ENCODE measurements at regions of chr5 and their contacts with region 1.

Region 1: DNA sequence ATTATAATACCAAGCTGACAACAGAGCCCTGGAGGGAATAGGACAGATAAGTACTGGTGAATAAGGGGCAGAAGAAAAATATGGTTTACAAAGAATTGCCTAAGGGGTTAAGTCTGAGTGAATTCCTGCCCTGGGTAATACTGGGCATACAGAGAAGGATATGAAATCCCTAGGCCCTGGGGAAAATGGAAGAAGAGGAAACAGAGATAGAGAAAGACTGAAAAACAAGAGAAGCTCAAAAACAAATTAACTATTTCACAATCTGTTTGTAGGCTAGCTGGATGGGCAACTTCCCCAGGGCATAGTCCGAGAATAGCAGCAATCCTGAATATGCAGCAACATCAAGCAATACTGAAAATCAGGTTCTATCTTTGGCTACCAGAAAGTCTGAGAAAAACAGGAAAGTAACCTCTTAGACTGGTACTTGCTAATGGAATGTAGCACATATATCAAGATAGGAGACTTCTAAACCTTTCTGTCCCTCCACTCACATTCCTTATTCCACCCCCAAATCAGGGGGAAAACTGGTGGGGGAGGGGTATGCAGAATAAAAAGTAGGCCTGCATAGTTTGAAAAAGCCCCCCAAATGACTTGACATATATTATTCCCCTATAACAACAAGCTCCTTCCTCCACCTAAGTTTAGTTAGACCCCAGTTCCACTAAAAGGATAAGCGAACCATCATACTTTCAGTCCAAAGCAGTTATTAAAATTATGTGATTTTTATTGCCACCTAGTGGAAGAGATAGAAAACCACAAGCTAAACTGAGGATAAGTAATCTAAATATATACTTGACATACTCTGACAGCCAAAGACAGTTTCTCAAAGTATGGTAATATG is 20.6 kb downstream of the SLC38A9 start:
- DNase-seq: no peak
- H3K4me3 ChIP-seq: peak overlapping the region in 1 of 4 donors; percentile 5
- H3K27ac ChIP-seq: peak overlapping the region in 2 of 5 donors; percentile 2 to 49
- H3K4me1 ChIP-seq: peaks cover 0 to 14% of the 10 kb centered on the region in 2 donors
- H3K27me3 ChIP-seq: no peaks in the 10 kb centered on the region
- CTCF ChIP-seq: peak; percentile 59 to 84 (median 70)
- POLR2A ChIP-seq: no peak

Region 2: DNA sequence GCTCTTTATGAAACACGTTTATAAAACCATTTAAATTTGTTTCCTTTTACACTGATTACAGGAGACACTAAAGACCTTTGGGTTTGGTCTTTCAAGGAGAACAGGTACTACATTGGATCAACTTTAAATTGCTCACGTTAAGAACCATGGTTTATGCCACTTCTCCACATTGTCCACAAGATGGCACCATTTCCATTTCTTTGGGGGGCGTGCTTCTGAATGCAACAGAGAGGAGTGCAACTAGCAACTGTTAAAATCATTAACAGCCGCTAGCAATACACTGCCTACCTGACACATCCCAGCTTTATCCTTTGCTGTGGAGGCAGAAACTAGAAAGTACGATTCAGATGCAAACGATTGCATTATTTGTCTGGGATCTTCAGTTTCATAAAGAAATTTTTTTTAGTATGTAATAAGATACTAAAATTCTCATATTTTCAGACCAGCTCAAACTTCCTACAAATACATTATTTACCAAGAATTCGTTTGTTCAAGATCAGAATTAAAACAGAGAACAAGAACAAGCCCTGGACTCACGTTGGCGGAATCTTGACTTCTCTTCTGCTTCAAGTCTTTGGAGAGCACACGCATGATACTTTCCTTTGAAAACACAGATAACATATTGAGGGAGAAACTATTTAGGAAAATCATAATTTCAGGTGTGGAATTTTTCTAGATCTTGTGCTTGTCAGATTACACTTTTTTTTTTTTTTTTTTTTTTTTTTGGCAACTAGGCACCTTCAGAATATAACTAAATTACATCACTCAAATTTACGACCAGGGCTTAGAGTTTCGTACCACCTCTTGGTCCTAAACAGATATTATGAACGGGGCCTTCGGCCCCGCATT is 519.2 kb before region 1 on chr5:
- intact Hi-C with region 1: loop called in 1 of 2 experiments (anchors 5 kb)
- DNase-seq: peak; percentile 37 to 68 (median 48)
- H3K4me3 ChIP-seq: peak overlapping the region in 1 of 4 donors; percentile 62
- H3K27ac ChIP-seq: no peak overlapping the region
- H3K4me1 ChIP-seq: peaks cover 13 to 26% of the 10 kb centered on the region in 2 donors
- H3K27me3 ChIP-seq: peaks cover 43% of the 10 kb centered on the region
- CTCF ChIP-seq: peak; percentile 70 to 84 (median 82)
- POLR2A ChIP-seq: no peak

Region 3: DNA sequence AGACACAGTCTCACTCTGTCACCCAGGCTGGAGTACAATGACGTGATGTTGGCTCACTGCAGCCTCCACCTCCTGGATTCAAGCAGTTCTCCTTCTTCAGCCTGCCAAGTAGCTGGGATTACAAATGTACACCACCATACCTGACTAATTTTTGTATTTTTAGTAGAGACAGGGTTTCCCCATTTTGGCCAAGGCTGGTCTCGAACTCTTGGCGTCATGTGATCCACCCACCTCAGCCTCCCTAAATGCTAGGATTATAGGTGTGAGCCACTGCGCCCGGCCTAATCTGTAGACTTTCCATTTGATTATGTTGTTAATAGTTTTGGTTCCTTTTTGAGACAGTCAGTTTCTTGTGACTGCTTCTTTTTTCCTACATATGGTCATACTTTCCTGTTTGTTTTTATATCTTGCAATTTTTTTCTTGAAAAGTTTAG is 352.7 kb before region 1 on chr5:
- intact Hi-C with region 1: loop called in 1 of 2 experiments (anchors 10 kb)
- DNase-seq: peak in 1 of 7 donors; percentile 27
- H3K4me3 ChIP-seq: no peak overlapping the region
- H3K27ac ChIP-seq: no peak overlapping the region
- H3K4me1 ChIP-seq: peaks cover 0 to 12% of the 10 kb centered on the region in 2 donors
- H3K27me3 ChIP-seq: no peaks in the 10 kb centered on the region
- CTCF ChIP-seq: no peak
- POLR2A ChIP-seq: no peak

Region 4: GRCh38 chr5:55347786-55348185 is 343.7 kb before region 1 on chr5:
- intact Hi-C with region 1: loop called in 1 of 2 experiments (anchors 5 kb)
- DNase-seq: no peak
- H3K4me3 ChIP-seq: no peak overlapping the region
- H3K27ac ChIP-seq: no peak overlapping the region
- H3K4me1 ChIP-seq: no peaks in the 10 kb centered on the region
- H3K27me3 ChIP-seq: no peaks in the 10 kb centered on the region
- CTCF ChIP-seq: no peak
- POLR2A ChIP-seq: no peak

Region 5: DNA sequence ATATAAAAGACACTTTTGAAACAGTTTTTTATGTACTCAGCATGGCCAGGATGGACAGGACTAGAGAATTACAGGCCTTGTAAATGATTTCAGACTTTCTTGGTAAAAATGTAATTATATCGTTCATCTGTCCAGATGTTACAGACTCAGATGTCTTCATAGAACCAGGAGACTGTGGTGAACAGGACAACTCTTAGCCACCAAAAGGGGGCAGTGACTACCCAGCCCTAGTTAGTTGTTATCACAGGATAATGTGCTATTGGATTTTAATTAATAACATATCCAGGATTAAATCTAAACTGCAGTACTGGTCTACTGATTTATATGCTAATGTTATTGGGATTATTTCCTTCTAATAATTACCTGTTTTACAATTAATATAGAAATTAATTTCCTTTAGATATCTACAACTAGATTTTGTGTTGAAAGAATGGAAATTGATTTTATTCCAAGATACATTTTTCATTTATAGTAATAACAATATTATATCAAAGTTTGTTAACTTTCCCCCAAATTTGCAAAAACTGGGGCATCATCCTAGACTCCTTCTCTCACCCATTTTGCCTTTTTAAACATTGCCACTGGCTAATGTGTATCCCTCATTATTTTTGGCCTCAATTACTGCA is 284.3 kb before region 1 on chr5:
- intact Hi-C with region 1: loop called in 1 of 2 experiments (anchors 5 kb)
- DNase-seq: peak in 1 of 7 donors; percentile 21
- H3K4me3 ChIP-seq: no peak overlapping the region
- H3K27ac ChIP-seq: no peak overlapping the region
- H3K4me1 ChIP-seq: peaks cover 0 to 5% of the 10 kb centered on the region in 2 donors
- H3K27me3 ChIP-seq: no peaks in the 10 kb centered on the region
- CTCF ChIP-seq: peak; percentile 13 to 65 (median 46)
- POLR2A ChIP-seq: no peak

Region 6: DNA sequence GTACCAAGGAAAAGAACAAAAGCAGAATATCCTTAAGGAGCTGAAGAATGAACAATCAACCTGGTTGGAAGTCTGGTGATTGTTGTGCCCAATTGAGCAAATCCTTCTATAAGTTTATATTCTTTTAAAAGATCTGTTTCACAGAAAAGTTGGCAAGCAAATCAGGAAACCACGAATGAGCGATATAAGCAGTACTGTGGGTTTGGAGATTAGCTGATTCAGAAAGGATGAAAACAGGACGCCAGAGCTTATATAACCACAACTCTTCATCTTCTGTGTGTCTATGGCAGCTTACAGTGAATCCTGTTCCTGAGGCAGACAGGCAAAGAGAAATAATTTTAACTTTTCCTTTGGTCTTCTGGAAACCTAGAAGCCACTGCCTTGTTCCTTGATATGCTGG is 41.1 kb before region 1 on chr5:
- intact Hi-C with region 1: no loop called
- DNase-seq: no peak
- H3K4me3 ChIP-seq: no peak overlapping the region
- H3K27ac ChIP-seq: no peak overlapping the region
- H3K4me1 ChIP-seq: peaks cover 0 to 7% of the 10 kb centered on the region in 2 donors
- H3K27me3 ChIP-seq: no peaks in the 10 kb centered on the region
- CTCF ChIP-seq: no peak
- POLR2A ChIP-seq: no peak

Region 7: GRCh38 chr5:55969956-55970355 is 278.5 kb after region 1 on chr5:
- intact Hi-C with region 1: no loop called
- DNase-seq: no peak
- H3K4me3 ChIP-seq: no peak overlapping the region
- H3K27ac ChIP-seq: no peak overlapping the region
- H3K4me1 ChIP-seq: peaks cover 3 to 31% of the 10 kb centered on the region in 2 donors
- H3K27me3 ChIP-seq: no peaks in the 10 kb centered on the region
- CTCF ChIP-seq: no peak
- POLR2A ChIP-seq: no peak